SK-N-SH (cell line): ENCODE measurements at regions of chr2 and their contacts with region 1.

Region 1: DNA sequence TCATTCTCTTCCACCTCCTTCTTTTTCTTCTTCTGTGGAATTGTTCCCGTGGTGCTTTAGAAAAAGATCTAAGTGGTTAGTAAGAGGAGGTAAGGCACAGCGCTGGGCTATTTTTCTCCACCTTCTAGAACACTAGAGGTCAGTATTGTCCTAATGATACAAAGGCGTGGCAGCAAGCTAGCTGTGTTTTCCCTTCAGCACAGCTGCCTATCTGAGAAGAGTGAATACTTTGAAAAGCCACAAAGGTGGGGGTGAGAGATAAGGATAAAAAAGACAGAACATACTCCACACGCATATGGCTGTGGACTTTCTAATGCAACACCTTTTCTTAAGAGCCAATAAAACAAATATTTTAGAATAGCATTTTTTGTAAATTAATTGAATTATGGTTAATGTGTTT is 2.1 kb downstream of the CNTNAP5 start:
- DNase-seq: peak; percentile 68
- H3K4me3 ChIP-seq: peak overlapping the region in 1 of 2 experiments; percentile 41; a peak in 1 of 4 replicates
- H3K27ac ChIP-seq: no peak overlapping the region
- H3K4me1 ChIP-seq: peaks cover 0 to 11% of the 10 kb centered on the region in 2 experiments; a peak in 2 of 4 replicates
- H3K27me3 ChIP-seq: no peaks in the 10 kb centered on the region
- CTCF ChIP-seq: peak; percentile 55
- EP300 ChIP-seq: no peak
- RAD21 ChIP-seq: peak; percentile 97

Region 2: GRCh38 chr2:124810132-124810531 is 783.0 kb after region 1 on chr2:
- CTCF ChIA-PET with region 1: interaction called, 13 read pairs
- POLR2A ChIA-PET with region 1: no interaction called
- DNase-seq: peak; percentile 9
- H3K4me3 ChIP-seq: no peak overlapping the region; a peak in 1 of 4 replicates
- H3K27ac ChIP-seq: no peak overlapping the region
- H3K4me1 ChIP-seq: no peaks in the 10 kb centered on the region
- H3K27me3 ChIP-seq: no peaks in the 10 kb centered on the region
- CTCF ChIP-seq: no peak
- EP300 ChIP-seq: no peak
- RAD21 ChIP-seq: peak; percentile 54